OCI-LY7 (cell line): ENCODE measurements at regions of chr2 and their contacts with region 1.

Region 1: GRCh38 chr2:85577386-85578242 is at the start of gene VAMP8:
- DNase-seq: peak; percentile 70
- H3K4me3 ChIP-seq: peak within 1 kb of the TSS; percentile 83
- H3K27ac ChIP-seq: peak within 1 kb of the TSS; percentile 79
- H3K4me1 ChIP-seq: peaks cover 27% of the 10 kb centered on the region
- CTCF ChIP-seq: no peak
- total RNA-seq, gene VAMP8: 112 and 156 TPM in 2 replicates

Region 2: DNA sequence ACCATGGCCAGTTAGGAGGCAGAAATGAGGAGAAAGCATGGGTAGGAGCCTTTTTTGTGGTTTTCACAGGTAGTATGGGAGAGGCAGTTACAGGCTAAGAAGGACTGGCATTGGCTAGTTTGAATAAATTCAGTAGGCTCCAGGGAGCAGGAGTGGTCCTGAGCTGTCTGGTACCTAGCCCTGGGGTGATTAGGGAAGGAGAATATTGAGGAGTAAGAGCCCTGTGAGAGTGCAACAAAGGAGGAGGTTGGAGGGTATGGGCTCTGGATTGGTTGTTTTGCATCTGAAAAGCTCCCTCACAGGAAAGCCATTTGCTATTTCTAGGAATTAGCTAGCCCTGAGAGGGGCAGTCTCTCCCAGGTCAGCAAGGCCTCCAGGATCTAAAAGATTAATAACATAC is 457.7 kb before region 1 on chr2:
- CTCF ChIA-PET with region 1: no interaction called
- POLR2A ChIA-PET with region 1: no interaction called
- intact Hi-C with region 1: no loop called
- DNase-seq: no peak
- H3K4me3 ChIP-seq: no peak overlapping the region
- H3K27ac ChIP-seq: no peak overlapping the region
- H3K4me1 ChIP-seq: no peaks in the 10 kb centered on the region
- CTCF ChIP-seq: no peak

Region 3: GRCh38 chr2:85561317-85561979 is 16.2 kb before region 1 on chr2 and contains the start of gene GGCX:
- CTCF ChIA-PET with region 1: no interaction called
- POLR2A ChIA-PET with region 1: interaction called, 14 read pairs
- intact Hi-C with region 1: loop called (anchors 1 kb)
- DNase-seq: peak; percentile 98
- H3K4me3 ChIP-seq: peak within 1 kb of the TSS; percentile 79
- H3K27ac ChIP-seq: peak within 1 kb of the TSS; percentile 65
- H3K4me1 ChIP-seq: peaks cover 30% of the 10 kb centered on the region
- CTCF ChIP-seq: no peak
- total RNA-seq, gene GGCX: 16.5 and 33.3 TPM in 2 replicates

Region 4: GRCh38 chr2:85595301-85596025 is 17.8 kb after region 1 on chr2 and contains the start of gene RNF181:
- CTCF ChIA-PET with region 1: no interaction called
- POLR2A ChIA-PET with region 1: interaction called, 34 read pairs
- intact Hi-C with region 1: loop called (anchors 1 kb)
- DNase-seq: peak; percentile 97
- H3K4me3 ChIP-seq: peak within 1 kb of the TSS; percentile 89
- H3K27ac ChIP-seq: peak within 1 kb of the TSS; percentile 42
- H3K4me1 ChIP-seq: peaks cover 23% of the 10 kb centered on the region
- CTCF ChIP-seq: no peak
- total RNA-seq, gene RNF181: 98.4 and 179 TPM in 2 replicates

Region 5: GRCh38 chr2:85602476-85603234 is 25.0 kb after region 1 on chr2 and contains the start of gene TMEM150A:
- CTCF ChIA-PET with region 1: no interaction called
- POLR2A ChIA-PET with region 1: interaction called, 3 read pairs
- intact Hi-C with region 1: loop called (anchors 2 kb)
- DNase-seq: peak; percentile 92
- H3K4me3 ChIP-seq: peak within 1 kb of the TSS; percentile 72
- H3K27ac ChIP-seq: no peak within 1 kb of the TSS
- H3K4me1 ChIP-seq: peaks cover 19% of the 10 kb centered on the region
- CTCF ChIP-seq: peak; percentile 53
- total RNA-seq, gene TMEM150A: 0.92 TPM in 1 of 2 replicates, not detected in the other

Region 6: GRCh38 chr2:85702172-85702571 is 124.6 kb after region 1 on chr2:
- CTCF ChIA-PET with region 1: no interaction called
- POLR2A ChIA-PET with region 1: no interaction called
- intact Hi-C with region 1: no loop called
- DNase-seq: no peak
- H3K4me3 ChIP-seq: no peak overlapping the region
- H3K27ac ChIP-seq: no peak overlapping the region
- H3K4me1 ChIP-seq: peaks cover 11% of the 10 kb centered on the region
- CTCF ChIP-seq: no peak